Heart right ventricle (tissue), 16 donors: ENCODE measurements at regions of chr10 and their contacts with region 1.

Region 1: GRCh38 chr10:89904755-89905154 is 203.4 kb downstream of the KIF20B start:
- DNase-seq: no peak
- ATAC-seq: no peak
- H3K4me3 ChIP-seq: no peak overlapping the region
- H3K27ac ChIP-seq: no peak overlapping the region
- H3K4me1 ChIP-seq: no peaks in the 10 kb centered on the region
- H3K27me3 ChIP-seq: no peaks in the 10 kb centered on the region
- CTCF ChIP-seq: no peak

Region 2: DNA sequence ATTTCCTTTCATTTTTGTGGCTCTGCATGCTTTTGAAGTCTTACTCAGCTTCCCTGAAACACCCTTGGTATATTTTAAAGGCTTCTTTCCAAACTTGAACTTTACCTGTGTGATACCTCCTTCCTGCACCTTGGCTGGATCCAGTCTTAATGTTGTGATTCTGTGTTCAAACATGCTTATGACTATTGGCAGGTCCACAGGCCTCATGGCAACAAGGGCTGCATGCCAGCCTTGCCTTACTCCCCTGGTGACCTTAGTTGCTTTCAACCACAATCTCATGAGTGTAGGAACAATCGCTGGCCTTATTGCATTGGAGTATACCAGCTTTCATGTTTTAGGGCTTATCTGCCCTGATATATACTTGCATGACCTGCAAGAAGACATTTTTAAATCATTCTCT is 35.3 kb after region 1 on chr10:
- intact Hi-C with region 1: loop called in 1 of 10 experiments (anchors 2 kb)
- DNase-seq: no peak
- ATAC-seq: no peak
- H3K4me3 ChIP-seq: no peak overlapping the region
- H3K27ac ChIP-seq: no peak overlapping the region
- H3K4me1 ChIP-seq: no peaks in the 10 kb centered on the region
- H3K27me3 ChIP-seq: no peaks in the 10 kb centered on the region
- CTCF ChIP-seq: no peak